Activated T-helper 2 cell treated with anti-CD3 and anti-CD28 coated beads, Interferon-gamma antibody, Interleukin-2, Interleukin-4, amounts not matched to agents 10 μg/mL and 5 μg/mL and 100 μg/mL, durations not matched to agents 14 hours and 24 hours and 36 hours (primary cell): ENCODE measurements at regions of chr12 and their contacts with region 1.

Region 1: DNA sequence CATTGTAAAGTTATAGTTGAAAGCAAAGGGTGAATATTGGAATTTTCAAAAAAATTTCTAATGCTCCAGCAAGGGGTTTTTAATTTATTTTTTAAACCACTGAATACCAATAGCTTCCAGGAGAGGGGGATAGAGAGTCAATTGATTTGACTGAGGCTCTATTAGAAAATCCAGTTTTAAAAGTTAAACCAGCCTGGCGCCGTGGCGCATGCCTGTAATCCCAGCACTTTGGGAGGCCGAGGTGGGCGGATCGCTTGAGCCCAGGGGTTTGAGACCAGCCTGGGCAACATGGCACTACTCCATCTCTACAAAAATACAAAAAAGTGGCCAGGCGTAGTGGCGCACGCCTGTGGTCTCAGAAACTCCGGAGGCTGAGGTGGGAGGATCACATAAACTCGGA is 150.1 kb downstream of the SLC38A4 start:
- DNase-seq: no peak
- H3K4me3 Mint-ChIP-seq: no peak overlapping the region
- H3K27ac Mint-ChIP-seq: no peak overlapping the region
- H3K4me1 Mint-ChIP-seq: peaks cover 17% of the 10 kb centered on the region
- H3K27me3 Mint-ChIP-seq: peaks cover 5% of the 10 kb centered on the region

Region 2: DNA sequence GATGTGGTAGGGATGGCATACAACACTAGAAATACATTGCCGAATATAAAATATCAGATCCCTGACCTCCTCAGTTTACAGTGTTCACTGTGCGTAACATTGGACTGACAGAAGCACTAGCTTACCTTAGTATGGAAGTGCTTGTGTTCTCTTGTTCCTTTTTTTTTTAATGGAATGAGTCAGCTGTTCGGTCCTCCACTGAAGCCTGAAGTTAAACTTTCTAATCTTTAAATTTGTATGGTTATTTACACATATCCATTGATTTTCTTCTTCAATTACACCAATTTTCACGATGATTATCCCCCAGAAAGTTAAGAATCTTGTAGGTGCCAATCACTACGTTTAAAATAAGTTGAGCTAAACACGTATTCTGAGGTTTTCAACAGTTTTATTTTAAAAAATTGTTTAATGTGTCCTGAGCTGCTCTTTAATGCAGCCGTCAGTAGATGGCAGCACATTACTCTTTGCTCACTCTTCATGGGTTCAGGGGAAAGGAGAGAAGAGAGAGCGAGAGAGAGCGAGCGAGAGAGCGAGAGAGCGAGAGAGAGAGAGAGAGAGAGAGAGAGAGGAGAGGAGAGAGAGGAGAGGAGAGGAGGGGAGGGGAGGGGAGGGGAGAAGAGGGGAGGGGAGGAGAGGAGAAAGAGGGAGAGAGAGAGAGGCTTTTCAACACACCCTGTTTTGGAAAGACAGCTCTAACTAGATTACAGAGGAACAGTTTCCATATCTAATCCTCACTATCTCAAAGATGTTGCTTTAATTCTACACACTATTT is 550.7 kb before region 1 on chr12:
- intact Hi-C with region 1: loop called (anchors 10 kb)
- DNase-seq: peak; percentile 33
- H3K4me3 Mint-ChIP-seq: no peak overlapping the region
- H3K27ac Mint-ChIP-seq: no peak overlapping the region
- H3K4me1 Mint-ChIP-seq: peaks cover 3% of the 10 kb centered on the region
- H3K27me3 Mint-ChIP-seq: peaks cover 44% of the 10 kb centered on the region

Region 3: DNA sequence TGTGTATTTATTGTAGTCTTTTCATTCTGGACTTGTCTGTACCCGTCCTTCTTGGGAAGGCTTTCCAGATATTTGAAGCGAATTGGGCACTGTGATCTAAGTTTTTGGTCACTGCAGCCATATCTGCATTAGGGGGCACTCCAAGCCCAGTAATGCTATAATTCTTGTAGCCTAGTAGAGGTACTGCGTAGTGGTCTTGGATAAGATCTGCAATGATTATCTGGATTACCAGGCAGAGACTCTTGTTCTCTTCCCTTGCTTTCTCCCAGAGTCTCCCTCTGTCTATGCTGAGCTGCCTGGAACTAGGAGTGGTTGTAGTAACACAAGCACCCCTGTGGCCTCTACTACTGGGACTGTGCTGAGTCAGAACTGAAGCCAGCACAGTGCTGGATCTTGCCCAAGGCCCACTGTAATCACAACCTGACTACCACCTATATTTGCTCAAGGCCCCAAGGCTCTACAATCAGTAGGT is 333.1 kb before region 1 on chr12:
- intact Hi-C with region 1: loop called (anchors 2 kb)
- DNase-seq: no peak
- H3K4me3 Mint-ChIP-seq: no peak overlapping the region
- H3K27ac Mint-ChIP-seq: no peak overlapping the region
- H3K4me1 Mint-ChIP-seq: no peaks in the 10 kb centered on the region
- H3K27me3 Mint-ChIP-seq: peaks cover 12% of the 10 kb centered on the region

Region 4: DNA sequence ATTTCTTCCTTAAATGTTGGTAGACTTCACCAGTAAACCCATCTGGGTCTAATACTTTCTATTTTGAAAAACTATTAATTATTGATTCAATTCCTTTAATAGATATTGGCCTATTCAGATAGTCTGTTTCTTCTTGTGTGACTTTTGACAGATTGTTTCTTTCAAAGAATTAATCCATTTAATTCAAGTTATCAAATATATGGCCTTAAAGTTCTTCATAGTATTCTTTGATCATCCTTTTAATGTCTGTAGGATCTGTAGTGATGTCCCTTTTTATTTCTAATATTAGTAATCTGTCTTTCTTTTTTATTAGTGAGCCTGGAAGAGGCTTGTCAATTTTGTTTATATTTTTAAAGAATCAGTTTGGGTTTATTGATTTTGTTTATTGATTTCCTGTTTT is 39.9 kb before region 1 on chr12:
- intact Hi-C with region 1: no loop called
- DNase-seq: no peak
- H3K4me3 Mint-ChIP-seq: no peak overlapping the region
- H3K27ac Mint-ChIP-seq: no peak overlapping the region
- H3K4me1 Mint-ChIP-seq: peaks cover 3% of the 10 kb centered on the region
- H3K27me3 Mint-ChIP-seq: no peaks in the 10 kb centered on the region

Region 5: DNA sequence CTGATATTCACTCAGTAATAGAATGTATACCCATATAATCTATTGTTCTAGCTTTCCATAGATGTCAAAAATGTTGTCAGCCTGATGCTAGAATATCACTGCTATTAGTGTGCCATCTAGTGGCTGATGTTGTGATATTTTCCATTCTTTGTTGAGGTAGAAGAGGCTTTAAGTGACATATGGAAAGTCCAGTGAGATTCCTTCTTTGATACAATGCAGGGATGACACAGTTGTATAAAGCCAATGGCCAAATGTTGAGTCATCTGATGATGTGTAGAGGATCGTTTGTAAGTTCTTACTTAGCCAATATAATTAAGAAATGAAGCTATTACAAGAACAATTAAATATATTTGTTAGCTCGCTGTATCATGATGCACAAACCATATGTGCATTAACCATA is 345.6 kb after region 1 on chr12:
- intact Hi-C with region 1: loop called (anchors 5 kb)
- DNase-seq: no peak
- H3K4me3 Mint-ChIP-seq: no peak overlapping the region
- H3K27ac Mint-ChIP-seq: no peak overlapping the region
- H3K4me1 Mint-ChIP-seq: peaks cover 5% of the 10 kb centered on the region
- H3K27me3 Mint-ChIP-seq: peaks cover 26% of the 10 kb centered on the region